GM10248 (cell line): ENCODE measurements at regions of chr2 and their contacts with region 1.

Region 1: GRCh38 chr2:18520451-18521425 is 39.7 kb downstream of the RDH14 start:
- DNase-seq: peak; percentile 63
- CTCF ChIP-seq: peak; percentile 81

Region 2: DNA sequence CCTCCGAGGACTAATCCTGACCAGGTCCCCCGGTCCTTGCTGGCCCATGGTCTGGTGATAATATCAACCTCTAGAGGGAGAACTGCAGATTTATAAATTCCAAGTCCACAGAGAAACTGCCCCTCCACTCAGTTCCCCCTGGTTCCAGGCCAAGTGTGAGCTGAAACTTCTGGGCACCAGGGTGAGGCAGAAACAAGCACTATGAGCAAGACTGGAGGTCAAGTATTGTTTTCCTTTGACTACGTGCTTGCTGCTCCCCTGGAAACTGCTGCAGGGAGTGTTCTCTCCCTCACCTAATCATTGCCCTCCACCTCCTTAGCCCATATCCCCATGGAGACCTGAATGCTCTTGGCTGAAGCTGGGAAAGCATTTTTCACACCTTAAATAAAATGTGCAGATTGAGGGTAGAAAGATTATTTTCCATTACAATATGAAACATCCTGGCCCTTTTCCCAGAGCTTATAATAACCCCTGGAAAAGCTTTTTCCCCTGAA is 95.5 kb before region 1 on chr2:
- CTCF ChIA-PET with region 1: no interaction called
- POLR2A ChIA-PET with region 1: no interaction called
- DNase-seq: no peak
- CTCF ChIP-seq: no peak

Region 3: DNA sequence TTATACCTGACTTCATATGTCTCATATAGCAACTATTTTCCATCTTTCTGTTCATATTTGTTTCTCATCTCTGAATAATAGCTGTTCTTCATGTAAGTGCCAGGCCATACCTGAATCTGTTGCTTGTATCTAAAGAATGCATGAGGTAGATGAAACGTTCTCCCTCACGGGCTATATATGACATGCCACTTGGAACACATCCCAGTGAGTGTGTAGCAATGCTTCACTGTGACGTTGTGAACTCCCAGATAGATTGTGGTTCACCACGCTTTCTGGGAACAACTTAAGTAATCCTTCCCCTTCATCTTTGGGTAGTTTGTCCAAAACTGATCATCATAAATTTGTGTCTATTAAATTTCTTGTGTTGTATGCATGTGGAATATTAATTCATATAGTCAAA is 20.4 kb before region 1 on chr2:
- CTCF ChIA-PET with region 1: interaction called, 34 read pairs
- POLR2A ChIA-PET with region 1: no interaction called
- DNase-seq: no peak
- CTCF ChIP-seq: no peak

Region 4: GRCh38 chr2:18536100-18536499 is 15.4 kb after region 1 on chr2:
- CTCF ChIA-PET with region 1: interaction called, 74 read pairs
- POLR2A ChIA-PET with region 1: no interaction called
- DNase-seq: no peak
- CTCF ChIP-seq: no peak

Region 5: GRCh38 chr2:18546567-18546966 is 25.8 kb after region 1 on chr2:
- CTCF ChIA-PET with region 1: interaction called, 10 read pairs
- POLR2A ChIA-PET with region 1: no interaction called
- DNase-seq: no peak
- CTCF ChIP-seq: no peak

Region 6: GRCh38 chr2:18560031-18560796 is 39.5 kb after region 1 on chr2 and contains the start of gene RDH14:
- CTCF ChIA-PET with region 1: interaction called, 15 read pairs
- POLR2A ChIA-PET with region 1: no interaction called
- DNase-seq: peak; percentile 89
- CTCF ChIP-seq: no peak

Region 7: DNA sequence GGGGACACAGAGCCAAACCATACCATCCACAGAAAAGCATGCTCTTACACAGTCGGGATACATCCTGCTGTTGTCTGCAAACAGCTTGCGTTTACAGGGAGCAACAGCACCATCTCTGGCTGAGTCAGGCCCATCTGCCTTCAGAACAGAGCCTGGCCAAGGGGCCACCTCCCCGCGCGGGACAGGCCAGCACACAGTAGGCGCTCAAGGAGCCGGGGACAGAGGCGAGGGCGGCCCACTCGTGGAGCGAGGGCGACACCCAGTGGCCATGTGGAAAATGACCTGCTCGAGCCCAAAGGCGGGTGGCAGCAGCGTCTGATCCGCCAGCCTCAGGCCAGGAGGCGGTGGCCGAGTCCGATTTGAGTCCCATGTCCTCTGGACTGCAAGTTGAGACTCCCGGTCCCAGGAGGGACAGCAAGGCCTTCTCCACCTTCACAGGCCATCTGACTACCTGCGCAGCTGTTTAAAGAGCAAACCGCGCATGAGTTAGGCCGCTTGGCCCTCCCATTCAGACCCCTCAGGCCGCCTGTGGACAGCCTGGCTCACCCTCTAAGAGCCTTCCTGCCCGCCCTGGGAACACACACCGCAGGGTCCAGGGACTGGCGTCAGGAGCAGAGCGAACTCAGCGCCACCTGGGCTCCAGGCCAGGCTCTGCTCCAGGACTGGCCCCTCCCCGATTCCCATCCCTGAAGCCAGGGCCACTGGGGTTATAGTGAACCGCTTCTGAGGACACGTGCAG is 1342.7 kb after region 1 on chr2:
- CTCF ChIA-PET with region 1: interaction called, 44 read pairs
- POLR2A ChIA-PET with region 1: no interaction called
- DNase-seq: peak; percentile 87
- CTCF ChIP-seq: peak; percentile 99